Panc1 (cell line): ENCODE measurements at regions of chr7 and their contacts with region 1.

Region 1: DNA sequence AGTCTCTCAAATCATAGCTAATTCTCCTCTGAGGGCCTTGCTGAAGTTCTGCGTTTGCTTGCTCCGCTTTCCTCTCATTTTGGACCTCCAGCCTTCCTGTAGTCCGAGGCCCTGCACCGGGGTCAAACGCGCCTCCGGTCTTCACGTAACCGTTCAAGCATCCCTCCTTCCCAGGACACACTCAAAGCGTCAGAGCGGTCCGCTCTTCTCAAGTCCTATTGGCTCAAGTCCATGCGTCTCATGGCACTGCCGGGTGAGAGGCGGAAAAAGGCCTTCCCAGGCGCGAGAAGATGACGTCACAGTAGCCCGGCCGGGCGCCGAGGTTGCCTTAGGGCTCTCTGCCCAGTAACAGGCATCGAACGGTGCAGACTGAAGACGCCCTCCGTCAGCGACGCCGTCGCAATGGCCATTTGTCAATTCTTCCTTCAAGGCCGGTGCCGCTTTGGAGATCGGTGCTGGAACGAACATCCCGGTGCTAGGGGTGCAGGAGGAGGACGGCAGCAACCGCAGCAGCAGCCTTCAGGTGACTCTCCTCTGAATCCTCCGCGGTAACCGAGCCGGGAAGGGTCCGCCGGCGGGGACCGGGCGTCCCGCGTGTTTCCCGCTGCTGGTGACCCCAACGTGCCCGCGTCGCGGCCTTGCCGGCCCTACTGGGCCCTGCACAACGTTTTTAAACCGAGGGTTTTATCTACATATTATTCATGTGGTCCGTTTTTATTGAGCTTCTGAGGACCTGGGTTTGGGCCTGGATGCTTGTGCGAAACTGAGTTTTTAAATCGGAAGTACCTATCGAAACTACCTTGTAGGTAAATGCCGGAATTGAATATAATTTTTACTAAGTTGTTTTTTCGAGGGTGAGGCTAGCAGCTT is at the start of gene NUP42:
- DNase-seq: peak; percentile 97
- ATAC-seq: peak; percentile 98
- H3K4me3 ChIP-seq: peak within 1 kb of the TSS; percentile 76 to 84
- H3K27ac ChIP-seq: peak within 1 kb of the TSS; percentile 96
- H3K4me1 ChIP-seq: peaks cover 3% of the 10 kb centered on the region
- H3K27me3 ChIP-seq: no peaks in the 10 kb centered on the region
- CTCF ChIP-seq: no peak
- total RNA-seq, gene NUP42: 30.3 TPM

Region 2: GRCh38 chr7:23093546-23093945 is 88.4 kb before region 1 on chr7:
- CTCF ChIA-PET with region 1: no interaction called
- POLR2A ChIA-PET with region 1: no interaction called
- in situ Hi-C with region 1: no loop called
- intact Hi-C with region 1: loop called (anchors 5 kb)
- DNase-seq: no peak
- ATAC-seq: peak; percentile 52; the same call in 1 of the 2 replicates
- H3K4me3 ChIP-seq: no peak overlapping the region
- H3K27ac ChIP-seq: no peak overlapping the region
- H3K4me1 ChIP-seq: peaks cover 1% of the 10 kb centered on the region; the same call in 1 of the 2 replicates
- H3K27me3 ChIP-seq: no peaks in the 10 kb centered on the region; the same call in 1 of the 2 replicates
- CTCF ChIP-seq: no peak

Region 3: GRCh38 chr7:23105644-23106056 is 76.3 kb before region 1 on chr7 and contains the start of gene KLHL7:
- CTCF ChIA-PET with region 1: interaction called, 6 read pairs
- POLR2A ChIA-PET with region 1: interaction called, 4 read pairs
- in situ Hi-C with region 1: no loop called
- intact Hi-C with region 1: loop called (anchors 5 kb)
- DNase-seq: peak; percentile 78
- ATAC-seq: peak; percentile 99
- H3K4me3 ChIP-seq: peak within 1 kb of the TSS; percentile 96 to 98
- H3K27ac ChIP-seq: peak within 1 kb of the TSS; percentile 93
- H3K4me1 ChIP-seq: peaks cover 17% of the 10 kb centered on the region
- H3K27me3 ChIP-seq: no peaks in the 10 kb centered on the region
- CTCF ChIP-seq: no peak
- total RNA-seq, gene KLHL7: 33.8 TPM

Region 4: GRCh38 chr7:23222439-23223030 is 40.6 kb after region 1 on chr7:
- CTCF ChIA-PET with region 1: no interaction called
- POLR2A ChIA-PET with region 1: no interaction called
- in situ Hi-C with region 1: no loop called
- intact Hi-C with region 1: no loop called
- DNase-seq: no peak
- ATAC-seq: peak; percentile 31; the same call in 1 of the 2 replicates
- H3K4me3 ChIP-seq: no peak overlapping the region
- H3K27ac ChIP-seq: no peak overlapping the region
- H3K4me1 ChIP-seq: no peaks in the 10 kb centered on the region
- H3K27me3 ChIP-seq: no peaks in the 10 kb centered on the region
- CTCF ChIP-seq: no peak

Region 5: GRCh38 chr7:23394488-23395171 is 212.7 kb after region 1 on chr7:
- CTCF ChIA-PET with region 1: interaction called, 13 read pairs
- POLR2A ChIA-PET with region 1: no interaction called
- in situ Hi-C with region 1: no loop called
- intact Hi-C with region 1: no loop called
- DNase-seq: no peak
- ATAC-seq: no peak
- H3K4me3 ChIP-seq: no peak overlapping the region
- H3K27ac ChIP-seq: no peak overlapping the region
- H3K4me1 ChIP-seq: 0 out of 2 replicates have a peak, but pooled peaks cover 4% of the 10 kb centered on the region
- H3K27me3 ChIP-seq: no peaks in the 10 kb centered on the region
- CTCF ChIP-seq: no peak